ENCODE measurements at regions of chr12 and their contacts with region 1.

Region 1: GRCh38 chr12:25386831-25387731 is 136.4 kb upstream of the KRAS start:
- DNase-seq: peak; percentile 88
- H3K4me3 ChIP-seq: peak overlapping the region; percentile 54 to 98 (median 94)
- H3K27ac ChIP-seq: peak overlapping the region; percentile 92
- H3K4me1 ChIP-seq: peaks cover 15% of the 10 kb centered on the region
- H3K27me3 ChIP-seq: peaks cover 0 to 5% of the 10 kb centered on the region in 2 experiments
- CTCF ChIP-seq: peak; percentile 73 to 86
- POLR2A ChIP-seq: no peak

Region 2: DNA sequence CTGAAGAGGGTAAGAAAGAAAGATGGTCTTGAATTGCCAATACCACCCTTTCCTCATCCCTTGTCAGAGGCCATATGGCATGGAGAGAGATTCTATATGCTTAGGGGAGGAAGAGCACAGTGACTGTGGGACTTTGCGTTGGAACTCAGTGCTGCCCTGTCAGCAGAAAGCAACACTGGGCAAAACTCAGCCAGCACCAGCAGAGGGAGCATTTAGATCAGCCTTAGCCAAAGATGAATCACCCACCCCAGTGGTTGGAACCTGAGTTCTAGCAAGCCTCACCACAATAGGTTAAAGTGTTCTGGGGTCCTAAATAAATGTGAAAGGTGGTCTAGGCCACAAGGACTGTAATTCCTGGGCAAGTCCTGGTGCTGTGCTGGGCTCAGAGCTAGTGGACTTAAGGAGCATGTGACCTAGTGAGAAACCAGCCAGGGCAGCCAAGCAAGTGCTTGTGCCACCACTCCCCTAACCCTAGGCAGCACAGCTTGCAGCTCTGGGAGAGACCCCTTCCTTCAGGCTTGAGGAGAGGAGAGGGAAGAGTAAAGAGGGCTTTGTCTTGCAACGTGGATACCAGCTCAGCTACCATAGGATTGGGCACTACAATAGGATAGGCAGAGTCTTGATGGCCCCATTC is 426.7 kb before region 1 on chr12:
- CTCF ChIA-PET with region 1: no interaction called
- POLR2A ChIA-PET with region 1: no interaction called
- dilution Hi-C with region 1: no loop called
- intact Hi-C with region 1: loop called (anchors 1 kb)
- DNase-seq: peak; percentile 66
- H3K4me3 ChIP-seq: no peak overlapping the region
- H3K27ac ChIP-seq: no peak overlapping the region
- H3K4me1 ChIP-seq: no peaks in the 10 kb centered on the region
- H3K27me3 ChIP-seq: peaks cover 0 to 2% of the 10 kb centered on the region in 2 experiments
- CTCF ChIP-seq: peak; percentile 73 to 79
- POLR2A ChIP-seq: no peak

Region 3: DNA sequence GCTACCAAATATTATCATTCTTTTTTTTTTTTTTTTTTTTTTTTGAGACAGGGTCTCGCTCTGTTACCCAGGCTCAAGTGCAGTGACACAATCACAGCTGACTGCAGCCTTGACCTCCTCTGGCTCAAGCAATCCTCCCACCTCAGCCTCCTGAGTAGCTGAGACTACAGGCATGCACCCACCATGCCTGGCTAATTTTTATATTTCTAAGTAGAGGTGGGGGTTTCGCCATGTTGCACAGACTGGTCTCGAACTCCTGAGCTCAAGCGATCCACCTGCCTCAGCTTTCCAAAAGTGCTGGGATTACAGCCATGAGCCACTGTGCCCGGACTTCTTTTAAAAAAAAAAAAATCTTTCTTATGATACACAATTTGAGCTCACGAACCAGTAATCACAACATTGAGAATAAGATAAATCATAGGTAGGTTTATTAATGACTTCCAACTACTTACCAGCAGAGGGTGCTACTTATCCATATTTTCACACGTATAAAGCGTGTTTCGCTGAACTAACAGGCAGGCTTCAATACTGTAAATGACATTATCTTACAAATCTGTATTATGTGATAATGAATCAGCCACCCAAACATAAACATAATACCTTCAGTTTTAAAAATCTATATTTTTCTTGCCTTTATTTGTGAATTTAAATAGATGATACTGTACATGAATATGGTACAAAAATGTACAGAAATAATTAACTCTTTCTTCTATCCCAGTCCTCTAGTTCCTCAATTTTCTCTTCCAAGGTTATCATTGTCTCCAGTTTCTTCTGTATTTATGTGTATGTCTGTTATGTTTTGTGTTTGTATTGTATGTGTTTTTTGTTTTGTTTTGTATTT is 395.7 kb before region 1 on chr12:
- CTCF ChIA-PET with region 1: interaction called, 6 read pairs
- POLR2A ChIA-PET with region 1: no interaction called
- dilution Hi-C with region 1: no loop called
- intact Hi-C with region 1: loop called (anchors 1 kb)
- DNase-seq: peak; percentile 74
- H3K4me3 ChIP-seq: no peak overlapping the region
- H3K27ac ChIP-seq: no peak overlapping the region
- H3K4me1 ChIP-seq: no peaks in the 10 kb centered on the region
- H3K27me3 ChIP-seq: peaks cover 0 to under 1% of the 10 kb centered on the region in 2 experiments
- CTCF ChIP-seq: peak; percentile 17 to 32
- POLR2A ChIP-seq: no peak

Region 4: DNA sequence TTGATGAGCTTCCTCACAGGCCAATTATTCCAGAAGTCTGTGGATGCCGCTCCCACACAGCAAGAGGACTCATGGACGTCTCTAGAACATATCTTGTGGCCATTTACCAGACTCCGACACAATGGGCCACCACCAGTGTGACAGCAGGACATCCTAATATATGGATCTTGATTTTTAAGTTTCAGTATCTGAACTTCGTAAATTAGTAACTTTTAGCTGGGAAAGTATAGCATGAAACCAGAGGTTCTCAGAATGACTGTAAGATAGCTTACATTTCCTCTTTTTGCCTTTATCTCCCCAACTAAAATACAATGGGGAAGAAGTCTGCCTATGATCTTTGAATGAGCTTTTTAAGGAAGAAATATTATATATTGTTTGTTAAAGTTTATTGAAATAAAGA is 279.2 kb before region 1 on chr12:
- CTCF ChIA-PET with region 1: no interaction called
- POLR2A ChIA-PET with region 1: no interaction called
- dilution Hi-C with region 1: no loop called
- intact Hi-C with region 1: no loop called
- DNase-seq: no peak
- H3K4me3 ChIP-seq: no peak overlapping the region
- H3K27ac ChIP-seq: no peak overlapping the region
- H3K4me1 ChIP-seq: no peaks in the 10 kb centered on the region
- H3K27me3 ChIP-seq: no peaks in the 10 kb centered on the region
- CTCF ChIP-seq: no peak
- POLR2A ChIP-seq: no peak

Region 5: DNA sequence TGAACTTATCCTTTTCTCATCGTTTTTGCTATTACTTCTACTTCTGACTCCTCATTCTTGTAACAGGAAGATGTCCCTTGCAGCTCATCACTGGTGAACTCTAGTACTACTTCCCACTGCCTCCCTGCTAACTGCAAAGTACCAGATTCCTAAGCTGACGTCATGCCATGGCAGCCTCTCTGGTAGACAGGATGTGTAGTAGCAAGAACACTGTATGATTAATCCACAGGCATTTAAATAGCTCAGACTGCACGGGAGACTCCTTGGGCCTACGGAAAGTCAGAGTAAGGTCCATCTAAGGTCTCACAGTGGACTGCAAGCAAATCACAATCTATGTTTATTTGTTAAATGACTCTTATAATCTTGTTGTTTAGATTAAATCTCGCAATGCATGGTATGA is 235.6 kb before region 1 on chr12:
- CTCF ChIA-PET with region 1: interaction called, 12 read pairs
- POLR2A ChIA-PET with region 1: interaction called, 4 read pairs
- dilution Hi-C with region 1: no loop called
- intact Hi-C with region 1: loop called (anchors 1 kb)
- DNase-seq: peak; percentile 84
- H3K4me3 ChIP-seq: no peak overlapping the region
- H3K27ac ChIP-seq: peak overlapping the region; percentile 45
- H3K4me1 ChIP-seq: peaks cover 6% of the 10 kb centered on the region
- H3K27me3 ChIP-seq: no peaks in the 10 kb centered on the region
- CTCF ChIP-seq: no peak
- POLR2A ChIP-seq: no peak

Region 6: GRCh38 chr12:25208554-25208953 is 178.5 kb before region 1 on chr12:
- CTCF ChIA-PET with region 1: interaction called, 5 read pairs
- POLR2A ChIA-PET with region 1: no interaction called
- dilution Hi-C with region 1: no loop called
- intact Hi-C with region 1: loop called (anchors 1 kb)
- DNase-seq: no peak
- H3K4me3 ChIP-seq: no peak overlapping the region
- H3K27ac ChIP-seq: no peak overlapping the region
- H3K4me1 ChIP-seq: no peaks in the 10 kb centered on the region
- H3K27me3 ChIP-seq: no peaks in the 10 kb centered on the region
- CTCF ChIP-seq: no peak
- POLR2A ChIP-seq: no peak

Region 7: GRCh38 chr12:25241167-25242020 is 145.7 kb before region 1 on chr12:
- CTCF ChIA-PET with region 1: interaction called, 18 read pairs
- POLR2A ChIA-PET with region 1: interaction called, 5 read pairs
- dilution Hi-C with region 1: no loop called
- intact Hi-C with region 1: no loop called
- DNase-seq: peak; percentile 55
- H3K4me3 ChIP-seq: no peak overlapping the region
- H3K27ac ChIP-seq: no peak overlapping the region
- H3K4me1 ChIP-seq: no peaks in the 10 kb centered on the region
- H3K27me3 ChIP-seq: no peaks in the 10 kb centered on the region
- CTCF ChIP-seq: peak; percentile 29 to 33
- POLR2A ChIP-seq: no peak